Endothelial cell of umbilical vein (primary cell): ENCODE measurements at regions of chr3 and their contacts with region 1.

Region 1: DNA sequence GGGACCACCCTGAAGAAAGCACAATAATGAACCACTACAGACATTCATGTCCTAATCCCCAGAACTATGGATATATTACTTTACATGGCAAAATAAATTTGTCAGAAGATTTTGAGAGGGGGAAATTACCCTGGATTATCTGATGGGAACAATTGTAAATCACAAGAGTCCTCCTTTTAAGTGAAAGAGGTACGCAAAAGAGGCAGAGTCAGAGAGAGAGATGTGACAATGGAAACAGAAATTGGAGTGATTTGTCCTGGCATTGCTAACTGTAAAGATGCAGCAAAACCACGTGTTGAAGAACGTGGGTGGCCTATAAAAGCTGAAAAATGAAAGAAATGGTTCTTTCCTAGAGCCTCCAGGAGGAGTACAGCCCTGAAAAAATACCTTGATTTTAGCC is 1121.4 kb upstream of the ALCAM start:
- DNase-seq: peak; percentile 11
- H3K4me3 ChIP-seq: no peak overlapping the region
- H3K27ac ChIP-seq: no peak overlapping the region
- H3K4me1 ChIP-seq: no peaks in the 10 kb centered on the region
- H3K27me3 ChIP-seq: no peaks in the 10 kb centered on the region
- CTCF ChIP-seq: no peak
- POLR2A ChIP-seq: no peak

Region 2: GRCh38 chr3:104234442-104235194 is 10.6 kb before region 1 on chr3:
- CTCF ChIA-PET with region 1: interaction called, 13 read pairs
- POLR2A ChIA-PET with region 1: no interaction called
- dilution Hi-C with region 1: no loop called
- intact Hi-C with region 1: no loop called
- DNase-seq: no peak
- H3K4me3 ChIP-seq: no peak overlapping the region
- H3K27ac ChIP-seq: no peak overlapping the region
- H3K4me1 ChIP-seq: no peaks in the 10 kb centered on the region
- H3K27me3 ChIP-seq: peaks cover 0 to 2% of the 10 kb centered on the region in 2 experiments
- CTCF ChIP-seq: no peak
- POLR2A ChIP-seq: no peak